Caco-2 (cell line): ENCODE measurements at regions of chr19 and their contacts with region 1.

Region 1: DNA sequence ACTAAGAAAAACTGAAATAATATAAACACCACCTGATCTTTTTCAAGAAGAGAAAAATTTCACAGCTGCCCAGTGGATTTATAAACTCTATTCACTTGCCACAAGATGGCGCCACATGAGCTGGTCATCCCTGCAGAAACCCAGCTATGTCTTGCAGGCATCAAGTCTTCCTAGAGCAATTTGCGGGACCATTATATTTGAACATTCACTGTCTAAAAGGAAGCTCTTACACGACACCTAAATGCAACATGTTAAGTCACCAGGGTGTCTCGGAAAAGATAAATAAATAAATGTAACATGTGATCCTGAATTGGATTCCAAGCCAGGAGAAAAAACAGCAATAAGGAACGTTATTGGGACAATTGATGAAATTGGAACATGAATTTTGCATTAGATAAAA is 20.3 kb upstream of the AKT2 start:
- DNase-seq: peak; percentile 81 to 83
- H3K4me3 ChIP-seq: no peak overlapping the region
- H3K4me3 Mint-ChIP-seq: no peak overlapping the region
- H3K27ac Mint-ChIP-seq: no peak overlapping the region
- H3K4me1 ChIP-seq: no peaks in the 10 kb centered on the region
- H3K4me1 Mint-ChIP-seq: no peaks in the 10 kb centered on the region
- H3K27me3 ChIP-seq: no peaks in the 10 kb centered on the region
- H3K27me3 Mint-ChIP-seq: no peaks in the 10 kb centered on the region
- CTCF ChIP-seq: peak; percentile 79 to 81

Region 2: GRCh38 chr19:40252395-40252794 is 53.0 kb before region 1 on chr19:
- CTCF ChIA-PET with region 1: no interaction called
- POLR2A ChIA-PET with region 1: no interaction called
- intact Hi-C with region 1: no loop called
- DNase-seq: no peak
- H3K4me3 ChIP-seq: no peak overlapping the region
- H3K4me3 Mint-ChIP-seq: no peak overlapping the region
- H3K27ac Mint-ChIP-seq: no peak overlapping the region
- H3K4me1 ChIP-seq: peaks cover 15% of the 10 kb centered on the region
- H3K4me1 Mint-ChIP-seq: peaks cover 17% of the 10 kb centered on the region
- H3K27me3 ChIP-seq: no peaks in the 10 kb centered on the region
- H3K27me3 Mint-ChIP-seq: no peaks in the 10 kb centered on the region
- CTCF ChIP-seq: no peak

Region 3: GRCh38 chr19:40392872-40393845 is 87.8 kb after region 1 on chr19:
- CTCF ChIA-PET with region 1: no interaction called
- POLR2A ChIA-PET with region 1: no interaction called
- intact Hi-C with region 1: no loop called
- DNase-seq: peak; percentile 65 to 69
- H3K4me3 ChIP-seq: no peak overlapping the region
- H3K4me3 Mint-ChIP-seq: no peak overlapping the region
- H3K27ac Mint-ChIP-seq: peak overlapping the region; percentile 20
- H3K4me1 ChIP-seq: peaks cover 11% of the 10 kb centered on the region
- H3K4me1 Mint-ChIP-seq: peaks cover 8% of the 10 kb centered on the region
- H3K27me3 ChIP-seq: no peaks in the 10 kb centered on the region
- H3K27me3 Mint-ChIP-seq: no peaks in the 10 kb centered on the region
- CTCF ChIP-seq: peak; percentile 52 to 65

Region 4: GRCh38 chr19:40403262-40403984 is 98.0 kb after region 1 on chr19:
- CTCF ChIA-PET with region 1: interaction called, 10 read pairs
- POLR2A ChIA-PET with region 1: no interaction called
- intact Hi-C with region 1: no loop called
- DNase-seq: peak; percentile 98
- H3K4me3 ChIP-seq: peak overlapping the region; percentile 78
- H3K4me3 Mint-ChIP-seq: peak overlapping the region; percentile 79
- H3K27ac Mint-ChIP-seq: peak overlapping the region; percentile 42
- H3K4me1 ChIP-seq: peaks cover 2% of the 10 kb centered on the region; the same call in 1 of the 2 replicates
- H3K4me1 Mint-ChIP-seq: peaks cover 23% of the 10 kb centered on the region
- H3K27me3 ChIP-seq: no peaks in the 10 kb centered on the region
- H3K27me3 Mint-ChIP-seq: no peaks in the 10 kb centered on the region
- CTCF ChIP-seq: no peak

Region 5: DNA sequence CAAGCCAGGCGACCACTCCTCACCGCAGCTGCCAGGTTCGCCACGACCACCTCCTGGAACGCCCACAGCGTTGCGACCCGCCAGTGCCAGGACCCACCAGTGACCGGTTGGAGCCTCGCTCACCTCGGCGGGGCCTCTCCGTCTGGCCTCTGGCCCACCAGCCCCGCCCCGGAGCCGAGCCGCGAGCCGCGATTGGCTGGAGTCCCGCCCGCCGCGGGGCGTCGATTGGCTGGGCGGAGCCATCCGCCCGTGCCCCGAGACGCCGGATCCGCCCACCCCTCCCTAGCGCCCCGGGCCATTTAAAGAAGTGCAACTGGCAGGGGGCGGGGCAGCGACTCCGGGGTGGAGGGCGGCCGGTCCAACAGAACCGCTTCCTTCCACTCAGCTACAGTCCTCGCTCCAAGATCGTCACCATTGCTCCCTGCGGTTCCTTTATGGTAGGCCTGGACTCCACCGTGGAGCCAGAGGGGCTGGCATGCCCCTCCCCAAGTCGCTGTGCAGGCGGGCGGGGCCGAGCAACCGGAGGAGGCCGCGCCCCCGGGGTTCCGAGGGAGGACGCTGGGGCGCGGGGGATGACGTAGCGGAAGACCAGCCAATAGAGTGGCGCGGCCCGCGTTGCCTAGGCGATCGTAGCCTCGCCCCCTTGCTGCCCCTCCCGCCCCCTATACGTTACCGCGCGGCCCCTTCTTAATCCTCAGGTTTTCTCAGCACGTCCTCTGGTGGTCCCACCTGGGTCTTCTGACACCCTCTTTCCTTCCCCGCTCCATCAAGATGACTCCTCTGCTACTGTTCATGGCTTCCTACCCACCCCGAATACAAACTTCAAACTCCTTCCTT is 139.0 kb after region 1 on chr19 and contains the start of gene SERTAD3:
- CTCF ChIA-PET with region 1: interaction called, 5 read pairs
- POLR2A ChIA-PET with region 1: no interaction called
- intact Hi-C with region 1: loop called (anchors 1 kb)
- DNase-seq: peak; percentile 97 to 99
- H3K4me3 ChIP-seq: peak within 1 kb of the TSS; percentile 90
- H3K4me3 Mint-ChIP-seq: peak within 1 kb of the TSS; percentile 97
- H3K27ac Mint-ChIP-seq: peak within 1 kb of the TSS; percentile 98
- H3K4me1 ChIP-seq: peaks cover 23% of the 10 kb centered on the region
- H3K4me1 Mint-ChIP-seq: peaks cover 9% of the 10 kb centered on the region
- H3K27me3 ChIP-seq: no peaks in the 10 kb centered on the region
- H3K27me3 Mint-ChIP-seq: no peaks in the 10 kb centered on the region
- CTCF ChIP-seq: peak in 1 of 2 experiments; percentile 61
- total RNA-seq, gene SERTAD3: 45.2 and 52.2 TPM in 2 replicates

Region 6: GRCh38 chr19:40529093-40529954 is 223.9 kb after region 1 on chr19:
- CTCF ChIA-PET with region 1: interaction called, 5 read pairs
- POLR2A ChIA-PET with region 1: no interaction called
- intact Hi-C with region 1: loop called (anchors 10 kb)
- DNase-seq: peak; percentile 85 to 91
- H3K4me3 ChIP-seq: peak overlapping the region; percentile 49
- H3K4me3 Mint-ChIP-seq: peak overlapping the region; percentile 72
- H3K27ac Mint-ChIP-seq: peak overlapping the region; percentile 19
- H3K4me1 ChIP-seq: peaks cover 12% of the 10 kb centered on the region
- H3K4me1 Mint-ChIP-seq: peaks cover 7% of the 10 kb centered on the region
- H3K27me3 ChIP-seq: no peaks in the 10 kb centered on the region
- H3K27me3 Mint-ChIP-seq: no peaks in the 10 kb centered on the region
- CTCF ChIP-seq: peak; percentile 94 to 98

Region 7: GRCh38 chr19:40603389-40604135 is 298.2 kb after region 1 on chr19:
- CTCF ChIA-PET with region 1: interaction called, 13 read pairs
- POLR2A ChIA-PET with region 1: no interaction called
- intact Hi-C with region 1: loop called (anchors 5 kb)
- DNase-seq: peak; percentile 100
- H3K4me3 ChIP-seq: peak overlapping the region; percentile 24
- H3K4me3 Mint-ChIP-seq: peak overlapping the region; percentile 87
- H3K27ac Mint-ChIP-seq: peak overlapping the region; percentile 72
- H3K4me1 ChIP-seq: peaks cover 54% of the 10 kb centered on the region
- H3K4me1 Mint-ChIP-seq: peaks cover 52% of the 10 kb centered on the region
- H3K27me3 ChIP-seq: no peaks in the 10 kb centered on the region; the same call in 1 of the 2 replicates
- H3K27me3 Mint-ChIP-seq: peaks cover 11% of the 10 kb centered on the region
- CTCF ChIP-seq: peak in 1 of 2 experiments; percentile 12